Ascending aorta (tissue), 2 donors: ENCODE measurements at regions of chr19 and their contacts with region 1.

Region 1: DNA sequence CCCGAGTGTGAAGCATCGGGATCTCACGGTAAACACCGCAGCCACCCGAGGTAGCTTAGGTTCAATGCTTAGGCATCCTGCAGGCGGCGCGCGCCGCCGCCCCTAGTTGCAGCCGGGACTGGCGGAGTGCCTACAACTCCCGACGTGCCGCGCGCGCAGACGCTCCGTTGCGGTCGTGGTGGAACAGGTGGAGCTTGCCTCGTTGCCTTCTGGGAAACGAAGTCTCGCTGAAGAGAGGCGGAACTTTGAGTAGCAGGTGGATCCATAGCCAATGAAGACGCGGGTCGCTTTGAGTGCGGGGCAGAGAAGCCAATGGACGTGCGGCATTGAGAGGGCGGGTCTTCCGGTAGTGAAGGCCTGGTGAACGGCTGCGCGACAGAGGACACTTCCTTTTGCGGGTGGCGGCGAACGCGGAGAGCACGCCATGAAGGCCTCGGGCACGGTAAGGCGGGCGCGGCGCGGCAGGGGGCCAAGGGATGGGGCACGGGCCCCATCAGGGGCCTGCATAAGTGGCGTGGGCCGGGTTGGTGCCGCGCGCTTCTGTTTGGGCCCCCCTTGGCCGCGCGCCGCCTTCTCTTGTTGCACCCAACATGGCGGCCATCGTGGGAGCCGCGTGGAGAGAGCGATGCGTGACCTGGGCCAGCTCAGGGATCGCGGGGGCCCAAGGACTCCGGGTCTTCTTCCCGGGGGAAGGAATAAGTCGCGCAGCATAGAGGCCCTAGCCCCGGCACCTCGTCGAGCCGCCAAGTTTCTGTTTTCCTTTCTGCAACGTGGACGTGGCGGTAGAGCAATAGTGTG is at the start of gene RPL18A:
- DNase-seq: peak; percentile 97 to 99
- H3K4me3 ChIP-seq: peak within 1 kb of the TSS; percentile 93 to 94
- H3K27ac ChIP-seq: peak within 1 kb of the TSS; percentile 88 to 90
- H3K4me1 ChIP-seq: peaks cover 10 to 17% of the 10 kb centered on the region in 2 donors
- H3K27me3 ChIP-seq: no peaks in the 10 kb centered on the region
- CTCF ChIP-seq: peak; percentile 74 to 79 (median 79)
- total RNA-seq, gene RPL18A: 2,481 TPM

Region 2: DNA sequence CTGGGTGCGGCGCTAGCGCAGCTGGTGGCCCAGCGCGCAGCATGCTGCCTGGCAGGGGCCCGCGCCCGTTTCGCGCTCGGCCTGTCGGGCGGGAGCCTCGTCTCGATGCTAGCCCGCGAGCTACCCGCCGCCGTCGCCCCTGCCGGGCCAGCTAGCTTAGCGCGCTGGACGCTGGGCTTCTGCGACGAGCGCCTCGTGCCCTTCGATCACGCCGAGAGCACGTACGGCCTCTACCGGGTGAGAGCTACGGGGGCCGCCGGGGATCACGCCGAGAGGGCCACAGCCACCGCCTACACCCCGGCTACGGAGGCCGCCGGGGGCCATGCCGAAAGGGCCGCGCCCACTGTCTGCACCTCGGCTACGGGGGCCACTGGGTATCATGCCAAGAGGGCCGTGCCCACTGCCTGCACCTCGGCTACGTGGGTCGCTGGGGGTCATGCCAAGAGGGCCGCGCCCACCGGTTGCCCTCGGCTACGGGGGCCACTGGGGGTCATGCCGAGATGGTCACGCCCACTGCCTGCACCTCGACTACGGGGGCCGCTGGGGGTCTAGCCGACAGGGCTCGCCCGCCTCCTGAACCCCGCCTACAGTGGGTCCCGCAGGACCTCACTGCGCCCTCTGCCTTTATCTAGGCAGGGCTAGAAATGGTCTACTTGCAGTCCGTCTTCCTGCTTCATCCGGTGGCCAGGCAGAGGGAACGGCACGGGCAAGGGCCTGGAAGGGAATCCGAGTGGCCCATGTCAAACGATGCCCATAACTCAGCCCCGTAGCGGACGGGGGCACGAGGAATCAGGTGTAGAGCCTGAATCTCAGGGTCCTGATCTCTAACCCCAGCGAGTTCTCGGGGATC is 347.8 kb before region 1 on chr19:
- intact Hi-C with region 1: loop called (anchors 5 kb)
- DNase-seq: peak; percentile 43 to 91
- H3K4me3 ChIP-seq: peak overlapping the region; percentile 85 to 97
- H3K27ac ChIP-seq: peak overlapping the region; percentile 92 to 97
- H3K4me1 ChIP-seq: peaks cover 5 to 14% of the 10 kb centered on the region in 2 donors
- H3K27me3 ChIP-seq: no peaks in the 10 kb centered on the region
- CTCF ChIP-seq: peak in 2 of 3 experiments; percentile 15 to 20

Region 3: DNA sequence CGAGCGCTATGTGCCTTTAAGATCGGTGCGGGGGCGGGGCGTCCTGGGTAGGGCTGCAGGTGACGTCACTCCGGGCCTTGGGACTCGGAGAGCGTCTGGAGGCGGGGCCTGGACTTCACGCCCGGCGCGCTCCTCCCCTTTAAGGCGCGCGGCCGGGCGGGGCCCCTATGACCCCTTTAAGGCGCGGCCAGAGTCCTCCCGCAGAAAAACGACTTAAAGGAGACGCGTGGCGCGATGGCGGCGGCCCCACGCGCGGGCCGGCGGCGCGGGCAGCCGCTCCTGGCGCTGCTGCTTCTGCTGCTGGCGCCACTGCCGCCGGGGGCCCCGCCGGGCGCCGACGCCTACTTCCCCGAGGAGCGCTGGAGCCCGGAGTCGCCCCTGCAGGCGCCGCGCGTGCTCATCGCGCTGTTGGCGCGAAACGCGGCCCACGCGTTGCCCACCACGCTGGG is 304.2 kb before region 1 on chr19 and contains the start of gene COLGALT1:
- intact Hi-C with region 1: loop called (anchors 5 kb)
- DNase-seq: peak; percentile 95 to 99
- H3K4me3 ChIP-seq: peak within 1 kb of the TSS; percentile 93 to 96
- H3K27ac ChIP-seq: peak within 1 kb of the TSS; percentile 57 to 60
- H3K4me1 ChIP-seq: peaks cover 0 to 9% of the 10 kb centered on the region in 2 donors
- H3K27me3 ChIP-seq: no peaks in the 10 kb centered on the region
- CTCF ChIP-seq: peak in 1 of 3 experiments; percentile 24
- total RNA-seq, gene COLGALT1: 95.4 TPM

Region 4: GRCh38 chr19:17718947-17719711 is 140.6 kb before region 1 on chr19 and contains the start of gene MAP1S:
- intact Hi-C with region 1: loop called (anchors 10 kb)
- DNase-seq: peak in 1 of 2 donors; percentile 72
- H3K4me3 ChIP-seq: peak within 1 kb of the TSS; percentile 86 to 99
- H3K27ac ChIP-seq: peak within 1 kb of the TSS; percentile 50 to 81
- H3K4me1 ChIP-seq: peaks cover 12 to 38% of the 10 kb centered on the region in 2 donors
- H3K27me3 ChIP-seq: no peaks in the 10 kb centered on the region
- CTCF ChIP-seq: no peak
- total RNA-seq, gene MAP1S: 111 TPM

Region 5: GRCh38 chr19:17794731-17795536 is 64.8 kb before region 1 on chr19 and contains the start of gene B3GNT3:
- intact Hi-C with region 1: no loop called
- DNase-seq: no peak
- H3K4me3 ChIP-seq: no peak within 1 kb of the TSS
- H3K27ac ChIP-seq: no peak within 1 kb of the TSS
- H3K4me1 ChIP-seq: no peaks in the 10 kb centered on the region
- H3K27me3 ChIP-seq: no peaks in the 10 kb centered on the region
- CTCF ChIP-seq: no peak
- total RNA-seq, gene B3GNT3: 0.64 TPM

Region 6: DNA sequence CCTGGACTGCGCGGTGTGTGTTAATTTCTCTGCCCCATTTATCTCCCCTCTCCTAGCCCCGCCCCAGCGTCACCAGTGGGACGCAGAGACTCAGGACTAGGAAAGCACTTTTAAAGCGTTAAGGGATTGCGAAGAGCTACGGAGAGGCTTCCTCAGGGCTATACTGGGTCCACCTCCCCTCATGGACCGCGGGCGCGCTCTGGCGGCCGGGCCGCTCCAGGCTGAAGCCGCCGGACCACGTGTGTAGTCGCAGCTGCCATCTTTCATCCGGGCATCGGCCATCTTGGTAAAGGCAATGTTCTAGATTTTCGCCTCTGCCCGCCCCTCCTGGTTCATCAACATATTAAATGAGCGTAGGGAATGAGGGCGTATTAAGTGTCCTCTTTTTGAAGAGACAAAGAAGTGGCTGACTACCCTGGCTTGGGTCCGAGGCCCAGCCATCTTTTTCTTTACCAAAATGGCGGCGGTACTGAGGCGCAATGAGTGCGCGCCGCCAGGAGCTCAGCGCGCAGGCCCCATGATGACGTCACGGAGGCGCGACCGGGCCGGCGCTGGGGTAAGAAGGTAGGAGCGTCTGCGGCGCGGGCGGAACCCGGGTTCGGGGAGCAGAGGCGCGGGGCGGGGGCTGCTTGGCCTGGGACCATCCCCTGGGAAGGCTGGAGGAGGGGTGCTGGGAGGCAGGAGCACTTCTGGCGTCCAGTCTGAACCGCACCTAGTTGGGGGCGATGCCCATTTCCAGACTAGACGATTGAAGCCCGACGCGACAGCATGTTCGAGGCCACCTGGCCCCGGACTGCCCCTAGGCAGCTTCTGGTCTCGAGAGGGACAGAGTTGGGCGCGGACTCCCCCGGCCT is 73.0 kb after region 1 on chr19 and contains the start of gene CCDC124:
- intact Hi-C with region 1: loop called (anchors 1 kb)
- DNase-seq: peak; percentile 59 to 93
- H3K4me3 ChIP-seq: peak within 1 kb of the TSS; percentile 60 to 71
- H3K27ac ChIP-seq: peak within 1 kb of the TSS; percentile 67 to 84
- H3K4me1 ChIP-seq: peaks cover 5 to 7% of the 10 kb centered on the region in 2 donors
- H3K27me3 ChIP-seq: no peaks in the 10 kb centered on the region
- CTCF ChIP-seq: peak; percentile 55 to 77 (median 65)
- total RNA-seq, gene CCDC124: 43.3 TPM

Region 7: DNA sequence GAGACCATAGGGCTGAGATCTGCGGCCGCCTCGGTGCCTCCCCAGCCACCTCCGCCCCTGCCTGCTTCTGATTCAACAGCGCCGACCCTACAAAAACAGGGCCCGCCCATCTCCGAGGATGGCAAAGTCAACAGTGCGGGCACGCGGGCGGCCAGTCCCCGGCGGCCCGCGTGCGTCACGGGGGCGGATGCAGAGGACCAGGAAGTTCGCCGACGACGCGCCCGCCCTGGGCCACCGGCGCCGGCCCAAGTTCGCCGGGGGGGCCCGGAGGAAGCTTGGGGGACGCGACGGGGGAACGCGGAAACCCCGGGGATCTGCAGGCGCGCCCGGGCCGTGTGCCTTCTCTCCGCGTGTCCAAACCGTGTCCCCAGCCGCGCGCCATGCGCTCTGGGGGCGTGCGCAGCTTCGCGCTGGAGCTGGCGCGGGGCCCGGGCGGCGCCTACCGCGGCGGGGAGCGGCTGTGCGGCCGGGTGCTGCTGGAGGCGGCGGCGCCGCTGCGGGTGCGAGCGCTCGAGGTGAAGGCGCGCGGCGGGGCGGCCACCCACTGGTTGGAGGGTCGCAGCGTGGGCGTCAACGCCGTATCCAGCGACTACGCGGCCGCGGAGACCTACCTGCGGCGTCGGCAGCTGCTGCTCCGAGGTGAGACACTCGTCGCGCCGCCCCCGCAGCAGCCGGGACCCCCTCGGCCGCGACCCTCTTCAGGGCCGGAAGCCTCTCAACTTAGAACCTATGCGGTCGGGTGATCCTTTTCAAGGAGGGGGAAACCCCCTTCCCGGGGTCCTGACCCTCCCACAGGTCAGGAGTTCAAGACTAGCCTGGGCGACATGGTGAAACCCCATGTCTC is 141.4 kb after region 1 on chr19:
- intact Hi-C with region 1: loop called (anchors 1 kb)
- DNase-seq: peak; percentile 93 to 99
- H3K4me3 ChIP-seq: peak overlapping the region; percentile 72 to 80
- H3K27ac ChIP-seq: peak overlapping the region; percentile 88 to 95
- H3K4me1 ChIP-seq: peaks cover 4 to 10% of the 10 kb centered on the region in 2 donors
- H3K27me3 ChIP-seq: no peaks in the 10 kb centered on the region
- CTCF ChIP-seq: no peak

Region 8: GRCh38 chr19:18058208-18059030 is 198.7 kb after region 1 on chr19:
- intact Hi-C with region 1: loop called (anchors 10 kb)
- DNase-seq: peak in 1 of 2 donors; percentile 85
- H3K4me3 ChIP-seq: peak overlapping the region; percentile 10 to 17
- H3K27ac ChIP-seq: peak overlapping the region; percentile 73 to 90
- H3K4me1 ChIP-seq: peaks cover 0 to 14% of the 10 kb centered on the region in 2 donors
- H3K27me3 ChIP-seq: no peaks in the 10 kb centered on the region
- CTCF ChIP-seq: peak; percentile 93 to 99 (median 97)